ENCODE measurements at regions of chr6 and their contacts with region 1.

Region 1: DNA sequence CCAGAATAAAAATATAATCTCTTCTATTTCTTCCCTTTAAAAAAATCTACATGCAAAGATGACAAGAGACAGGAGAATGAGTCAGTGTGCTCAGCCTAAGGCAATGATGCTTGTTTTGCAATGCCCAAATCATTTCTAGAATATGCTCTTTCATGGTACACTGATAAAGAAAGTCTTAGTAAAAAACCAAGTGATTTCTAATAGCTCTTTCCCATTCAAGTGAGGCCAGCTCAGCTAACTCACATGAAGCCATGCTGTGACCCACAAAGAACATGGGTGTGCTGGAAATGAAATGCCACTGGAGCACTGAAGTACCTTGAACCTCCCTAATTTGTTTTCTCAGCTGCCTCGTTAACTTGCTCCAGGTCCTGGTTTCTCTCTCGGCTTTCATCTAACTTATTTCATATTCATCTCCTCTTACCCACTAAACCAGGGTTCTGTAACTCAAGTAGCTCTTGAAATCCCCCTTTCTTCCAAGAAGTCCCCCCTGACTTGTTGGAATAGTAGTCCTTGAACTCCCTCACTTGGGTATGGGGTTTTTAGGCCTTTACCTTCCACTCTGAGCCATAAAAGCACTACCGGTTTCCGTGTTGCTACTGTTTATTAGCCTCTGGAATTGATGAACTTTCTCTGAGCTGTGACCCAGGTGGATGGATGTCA is 92.7 kb downstream of the IRF4 start:
- DNase-seq: no peak
- H3K4me3 ChIP-seq: no peak overlapping the region
- H3K27ac ChIP-seq: no peak overlapping the region
- H3K27me3 ChIP-seq: no peaks in the 10 kb centered on the region
- CTCF ChIP-seq: no peak

Region 2: GRCh38 chr6:399785-400534 is 84.3 kb before region 1 on chr6:
- intact Hi-C with region 1: no loop called
- DNase-seq: no peak
- H3K4me3 ChIP-seq: no peak overlapping the region
- H3K27ac ChIP-seq: no peak overlapping the region
- H3K27me3 ChIP-seq: peaks cover 0 to 25% (median 6%) of the 10 kb centered on the region in 45 donors
- CTCF ChIP-seq: no peak

Region 3: GRCh38 chr6:453152-453551 is 31.1 kb before region 1 on chr6:
- intact Hi-C with region 1: loop called in 1 of 2 experiments (anchors 5 kb)
- DNase-seq: peak; percentile 9 to 87 (median 82)
- H3K4me3 ChIP-seq: peak overlapping the region in 50 of 59 donors; percentile 7 to 64 (median 36)
- H3K27ac ChIP-seq: peak overlapping the region in 42 of 59 donors; percentile 5 to 80 (median 60)
- H3K27me3 ChIP-seq: peaks cover 0 to 4% (median 0%) of the 10 kb centered on the region in 45 donors
- CTCF ChIP-seq: peak in 20 of 56 donors; percentile 7 to 57 (median 34)

Region 4: DNA sequence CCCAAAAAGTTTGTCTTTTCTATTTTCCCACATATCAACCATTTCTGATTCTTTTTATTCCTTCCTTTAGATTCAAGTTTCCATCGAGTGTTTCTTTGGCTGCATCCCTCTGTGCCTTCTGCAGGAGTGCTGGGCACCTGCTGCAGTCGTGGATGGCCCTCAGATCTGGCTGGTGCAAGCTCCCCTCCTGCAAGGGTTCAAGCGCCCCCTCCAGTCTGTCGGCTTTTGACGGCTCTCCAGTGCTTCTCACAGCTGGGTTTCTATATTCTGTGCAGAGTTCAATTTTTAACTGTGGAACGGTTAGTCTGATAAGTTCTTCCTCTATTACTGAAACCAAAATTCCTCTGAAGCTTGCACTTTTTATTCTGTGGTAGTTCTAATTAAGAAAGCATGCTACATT is 40.6 kb after region 1 on chr6:
- intact Hi-C with region 1: no loop called
- DNase-seq: peak in 1 of 10 donors; percentile 53
- H3K4me3 ChIP-seq: no peak overlapping the region
- H3K27ac ChIP-seq: peak overlapping the region in 1 of 59 donors; percentile 32
- H3K27me3 ChIP-seq: no peaks in the 10 kb centered on the region
- CTCF ChIP-seq: peak in 35 of 56 donors; percentile 10 to 62 (median 32)

Region 5: DNA sequence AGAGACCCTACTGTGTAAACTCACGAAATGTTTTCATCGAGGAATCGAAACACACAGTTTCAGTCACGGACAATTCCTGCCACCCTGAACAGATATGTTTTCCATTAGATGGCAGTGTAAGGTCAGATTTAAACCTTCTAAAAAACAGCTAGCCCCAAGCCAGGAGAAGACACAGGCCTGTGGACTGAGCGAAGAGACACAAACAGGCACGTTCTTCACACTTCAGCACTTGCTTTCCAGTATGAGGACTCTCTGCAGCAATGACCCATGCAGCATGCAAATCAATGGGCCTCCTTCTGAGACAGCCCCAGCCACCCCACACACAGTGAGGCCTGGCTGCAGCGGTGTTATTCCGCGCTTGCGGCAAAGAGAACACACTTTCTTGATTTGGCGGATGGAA is 140.8 kb after region 1 on chr6:
- intact Hi-C with region 1: no loop called
- DNase-seq: no peak
- H3K4me3 ChIP-seq: peak overlapping the region in 4 of 59 donors; percentile 11 to 23 (median 16)
- H3K27ac ChIP-seq: peak overlapping the region in 2 of 59 donors; percentile 14 to 31
- H3K27me3 ChIP-seq: no peaks in the 10 kb centered on the region
- CTCF ChIP-seq: peak in 45 of 56 donors; percentile 17 to 70 (median 40)